Activated naive CD4-positive, alpha-beta T cell treated with anti-CD3 and anti-CD28 coated beads for 36 hours (primary cell): ENCODE measurements at regions of chr4 and their contacts with region 1.

Region 1: GRCh38 chr4:184538023-184538599 is 63.8 kb upstream of the IRF2 start:
- DNase-seq: peak; percentile 79
- H3K4me3 Mint-ChIP-seq: peak overlapping the region; percentile 97
- H3K27ac Mint-ChIP-seq: peak overlapping the region; percentile 96
- H3K4me1 Mint-ChIP-seq: peaks cover 35% of the 10 kb centered on the region
- H3K27me3 Mint-ChIP-seq: no peaks in the 10 kb centered on the region

Region 2: DNA sequence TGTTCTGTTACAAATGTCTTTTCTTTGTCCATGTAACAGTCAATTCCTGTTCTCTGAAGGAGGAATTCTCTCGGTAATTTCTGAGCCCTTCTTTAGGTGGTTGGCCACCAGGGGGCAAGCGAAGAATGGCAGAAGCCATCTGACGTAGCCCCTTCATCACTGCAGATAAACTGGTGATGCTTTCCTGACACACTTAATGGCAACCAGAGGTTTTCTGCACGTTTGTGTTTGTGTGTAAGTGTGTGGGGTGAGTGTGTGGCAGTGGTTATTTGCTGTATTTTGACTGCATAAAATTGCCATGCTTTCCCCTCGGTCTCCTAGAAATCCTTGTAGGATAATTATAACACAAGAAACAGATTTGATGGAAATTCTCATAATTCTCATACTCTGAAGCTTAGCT is 697.8 kb before region 1 on chr4:
- CTCF ChIA-PET with region 1: no interaction called
- intact Hi-C with region 1: loop called (anchors 5 kb)
- DNase-seq: peak; percentile 81
- H3K4me3 Mint-ChIP-seq: no peak overlapping the region
- H3K27ac Mint-ChIP-seq: no peak overlapping the region
- H3K4me1 Mint-ChIP-seq: no peaks in the 10 kb centered on the region
- H3K27me3 Mint-ChIP-seq: peaks cover 12% of the 10 kb centered on the region

Region 3: DNA sequence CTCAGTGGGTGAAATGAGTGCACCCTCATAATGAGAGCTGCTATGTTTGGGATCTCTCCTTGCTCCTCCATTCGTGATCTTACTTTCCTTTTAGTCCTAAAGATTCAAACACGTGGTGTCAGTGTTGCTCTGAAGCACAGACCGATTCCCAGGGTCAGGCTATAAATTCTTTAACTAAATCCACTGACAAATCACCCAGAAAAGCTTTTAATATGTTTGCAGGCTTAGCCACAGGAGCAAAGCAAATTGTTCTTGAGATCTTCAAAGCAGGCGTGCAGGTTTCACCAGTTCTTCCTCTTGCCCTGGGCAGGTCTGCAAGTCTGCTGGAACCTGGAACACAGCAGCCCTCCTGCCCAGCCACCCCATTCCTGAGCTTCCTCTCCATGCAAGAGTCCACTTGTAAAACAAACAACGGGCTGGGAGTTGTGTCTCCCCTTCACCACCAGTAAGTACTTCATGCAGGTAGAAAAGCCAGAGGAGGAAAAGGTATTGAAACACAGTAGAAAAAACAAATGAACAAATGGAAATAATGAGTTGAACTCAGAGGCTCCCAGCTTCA is 250.3 kb before region 1 on chr4:
- CTCF ChIA-PET with region 1: no interaction called
- intact Hi-C with region 1: loop called (anchors 1 kb)
- DNase-seq: no peak
- H3K4me3 Mint-ChIP-seq: no peak overlapping the region
- H3K27ac Mint-ChIP-seq: no peak overlapping the region
- H3K4me1 Mint-ChIP-seq: peaks cover 52% of the 10 kb centered on the region
- H3K27me3 Mint-ChIP-seq: peaks cover 4% of the 10 kb centered on the region

Region 4: DNA sequence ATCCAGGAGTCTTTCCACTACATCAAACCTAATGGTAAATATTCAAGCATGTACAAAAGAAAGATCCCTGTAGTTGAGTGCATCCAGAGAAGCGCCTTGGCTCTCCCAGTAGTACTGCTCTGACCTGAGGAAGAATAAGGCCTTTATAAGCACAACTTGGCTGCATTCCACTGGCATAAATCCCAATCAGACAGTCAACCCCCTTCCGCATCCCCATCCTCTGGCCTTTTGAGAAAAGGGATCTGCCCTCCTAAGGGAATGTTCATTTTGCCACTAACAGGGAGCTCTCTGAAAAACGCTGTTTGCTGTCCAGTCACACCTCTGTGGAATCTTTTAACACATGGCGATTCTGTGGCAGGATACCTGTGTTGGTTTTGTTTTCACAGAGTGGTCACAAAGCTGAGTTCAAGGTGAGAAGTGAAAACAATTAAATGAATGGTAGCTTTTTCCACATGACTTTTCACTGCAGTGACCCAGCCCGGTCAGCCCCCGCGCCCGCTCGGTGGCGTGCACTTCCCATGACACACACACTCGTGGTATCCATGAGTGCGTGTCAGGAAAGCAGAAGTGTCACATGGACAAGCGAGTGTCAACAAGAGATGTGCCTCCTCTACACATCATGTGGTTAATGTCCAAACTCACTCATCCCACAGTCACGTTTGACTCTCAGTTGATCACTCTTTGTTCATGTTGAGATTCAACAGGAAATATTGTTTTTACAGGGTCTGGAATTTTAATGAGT is 208.3 kb before region 1 on chr4:
- CTCF ChIA-PET with region 1: no interaction called
- intact Hi-C with region 1: loop called (anchors 1 kb)
- DNase-seq: no peak
- H3K4me3 Mint-ChIP-seq: no peak overlapping the region
- H3K27ac Mint-ChIP-seq: no peak overlapping the region
- H3K4me1 Mint-ChIP-seq: peaks cover 27% of the 10 kb centered on the region
- H3K27me3 Mint-ChIP-seq: no peaks in the 10 kb centered on the region

Region 5: DNA sequence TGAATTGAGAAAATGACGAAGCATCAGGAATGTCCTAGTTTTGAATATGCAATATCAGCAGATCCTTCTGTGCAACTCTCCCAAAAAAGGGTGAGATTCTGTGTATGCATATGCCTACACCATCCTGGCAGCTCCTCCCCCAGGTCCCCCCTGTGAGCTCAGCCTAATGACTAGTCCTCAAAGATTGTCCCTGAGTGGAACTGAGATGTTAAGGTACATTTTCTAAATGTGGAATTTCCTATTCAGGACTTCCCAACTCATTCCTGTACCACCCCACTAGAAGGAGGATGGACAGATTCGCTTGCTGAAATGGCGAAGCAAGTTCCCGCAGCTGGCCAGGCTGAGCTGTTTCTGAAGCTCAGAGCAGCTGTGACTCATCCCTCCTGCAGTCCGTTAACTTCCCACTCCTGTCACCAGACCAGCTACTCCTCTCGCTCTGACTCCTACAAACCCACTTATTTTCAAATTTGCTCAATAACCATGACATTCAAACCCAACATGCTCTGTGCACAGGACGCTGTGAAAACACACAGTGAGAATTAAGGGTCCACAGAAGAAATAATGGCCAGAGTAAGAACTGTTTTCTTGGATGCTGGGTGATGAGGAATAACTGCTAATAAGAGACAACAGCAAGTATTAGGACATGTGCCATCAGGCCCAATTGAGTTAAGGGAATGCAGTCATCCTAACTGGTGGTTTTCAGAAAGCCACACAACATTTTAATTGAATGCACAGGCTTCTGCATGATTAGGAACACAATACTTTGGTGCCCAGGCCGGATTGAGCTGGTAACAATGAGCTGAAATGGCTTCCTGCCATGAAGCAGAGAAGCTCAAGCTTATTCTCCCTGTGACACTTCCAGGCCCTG is 23.8 kb before region 1 on chr4:
- CTCF ChIA-PET with region 1: interaction called, 9 read pairs
- intact Hi-C with region 1: loop called (anchors 1 kb)
- DNase-seq: peak; percentile 86
- H3K4me3 Mint-ChIP-seq: peak overlapping the region; percentile 23
- H3K27ac Mint-ChIP-seq: peak overlapping the region; percentile 66
- H3K4me1 Mint-ChIP-seq: peaks cover 35% of the 10 kb centered on the region
- H3K27me3 Mint-ChIP-seq: no peaks in the 10 kb centered on the region

Region 6: DNA sequence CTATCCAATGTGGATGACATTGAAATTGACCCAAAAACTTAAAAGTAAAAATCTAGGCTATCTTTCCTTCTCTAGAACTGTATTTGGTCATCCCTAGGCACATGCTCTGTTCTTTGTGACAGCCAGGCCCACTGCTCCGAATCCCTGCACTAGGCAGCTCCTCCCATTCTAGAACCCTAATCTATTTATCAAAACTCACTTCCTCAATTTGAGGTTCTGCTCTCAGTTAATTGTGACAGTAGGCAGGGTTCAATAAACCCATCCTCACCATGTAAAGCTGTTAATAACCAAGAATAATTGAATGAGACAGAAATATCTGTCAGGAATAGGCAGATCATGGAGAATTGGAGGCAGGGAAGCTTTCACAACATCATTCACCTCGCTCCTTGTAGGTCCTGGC is 11.9 kb before region 1 on chr4:
- CTCF ChIA-PET with region 1: no interaction called
- intact Hi-C with region 1: no loop called
- DNase-seq: no peak
- H3K4me3 Mint-ChIP-seq: no peak overlapping the region
- H3K27ac Mint-ChIP-seq: no peak overlapping the region
- H3K4me1 Mint-ChIP-seq: peaks cover 21% of the 10 kb centered on the region
- H3K27me3 Mint-ChIP-seq: no peaks in the 10 kb centered on the region

Region 7: DNA sequence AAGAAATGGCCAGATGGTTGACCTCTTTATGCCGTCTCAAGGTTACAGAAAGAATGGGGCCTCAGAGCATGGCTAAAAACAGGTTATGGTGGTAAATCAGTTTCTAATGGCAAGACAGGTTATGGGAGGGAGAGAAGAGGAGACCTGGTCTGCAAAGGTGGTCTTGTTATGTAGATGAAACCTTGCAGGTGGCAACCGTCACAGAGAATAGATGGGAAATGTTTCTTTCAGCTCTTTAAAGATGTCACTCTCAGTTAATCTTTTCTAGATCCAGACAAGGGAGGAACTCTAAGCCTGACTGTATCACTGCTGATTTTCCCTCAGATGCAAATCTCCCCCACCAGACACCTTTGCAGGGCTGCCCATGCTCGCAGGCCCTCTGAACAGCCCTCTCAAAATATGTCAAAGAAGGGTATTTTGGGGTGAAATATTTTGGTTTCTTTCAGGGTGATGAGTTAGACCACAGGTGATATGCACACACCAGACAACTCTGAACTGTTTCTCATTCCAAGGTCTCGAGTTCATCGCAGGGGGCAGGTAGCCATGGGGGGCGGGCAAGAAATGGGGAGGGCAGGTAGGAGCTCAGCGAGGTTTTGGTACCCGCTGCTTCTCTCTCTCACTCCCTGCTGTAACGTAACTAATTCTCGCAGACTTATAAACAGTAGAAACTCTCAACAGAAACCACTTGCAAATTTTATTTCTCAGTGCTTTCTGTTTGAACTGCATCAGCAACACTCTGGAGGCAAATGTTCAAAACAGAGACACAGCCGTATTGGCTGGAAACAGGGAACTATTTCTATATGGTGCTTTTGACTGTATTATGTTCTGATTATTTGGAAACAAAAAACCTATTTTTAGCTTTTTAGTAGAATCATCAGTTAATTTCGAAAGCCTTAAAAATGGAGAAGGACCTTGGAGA is 78.8 kb after region 1 on chr4:
- CTCF ChIA-PET with region 1: no interaction called
- intact Hi-C with region 1: no loop called
- DNase-seq: no peak
- H3K4me3 Mint-ChIP-seq: no peak overlapping the region
- H3K27ac Mint-ChIP-seq: no peak overlapping the region
- H3K4me1 Mint-ChIP-seq: no peaks in the 10 kb centered on the region
- H3K27me3 Mint-ChIP-seq: no peaks in the 10 kb centered on the region

Region 8: GRCh38 chr4:184649026-184649970 is 111.2 kb after region 1 on chr4 and contains the starts of genes CASP3 and PRIMPOL:
- CTCF ChIA-PET with region 1: interaction called, 3 read pairs
- intact Hi-C with region 1: loop called (anchors 1 kb)
- DNase-seq: peak; percentile 97
- H3K4me3 Mint-ChIP-seq: peak within 1 kb of the TSS; percentile 93
- H3K27ac Mint-ChIP-seq: peak within 1 kb of the TSS; percentile 90
- H3K4me1 Mint-ChIP-seq: peaks cover 50% of the 10 kb centered on the region
- H3K27me3 Mint-ChIP-seq: no peaks in the 10 kb centered on the region
- total RNA-seq, gene CASP3: 27.5 to 27.9 TPM
- total RNA-seq, gene PRIMPOL: 17.9 to 18.1 TPM